Posterior vena cava (tissue), 2 donors: ENCODE measurements at regions of chr5 and their contacts with region 1.

Region 1: GRCh38 chr5:28408186-28408585 is 1369.8 kb upstream of the CDH9 start:
- DNase-seq: no peak

Region 2: DNA sequence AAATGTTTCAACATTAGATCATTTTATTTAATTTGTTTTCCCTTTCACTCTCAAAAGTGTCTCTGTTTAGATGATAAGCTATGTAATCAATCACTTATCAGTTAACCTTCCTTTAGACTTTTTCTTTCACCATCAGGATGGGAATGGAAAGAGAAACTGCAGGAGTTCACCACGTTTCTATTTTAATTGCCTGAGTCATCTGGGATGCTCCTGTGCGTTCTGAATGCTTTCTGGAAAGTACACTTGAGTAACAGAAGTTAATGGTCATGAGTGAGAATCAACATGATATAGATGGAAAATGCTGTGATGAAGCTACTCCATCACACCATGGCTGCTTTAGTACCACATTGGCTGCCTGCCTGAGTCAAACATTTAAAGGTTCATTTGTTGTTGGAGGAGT is 586.5 kb before region 1 on chr5:
- intact Hi-C with region 1: loop called in 1 of 2 experiments (anchors 10 kb)
- DNase-seq: no peak